Calu3 (cell line): ENCODE measurements at regions of chr11 and their contacts with region 1.

Region 1: GRCh38 chr11:77557554-77557953 is 32.2 kb upstream of the AQP11 start:
- DNase-seq: peak; percentile 51
- H3K4me3 Mint-ChIP-seq: no peak overlapping the region
- H3K27ac Mint-ChIP-seq: no peak overlapping the region
- H3K4me1 Mint-ChIP-seq: peaks cover 21% of the 10 kb centered on the region
- H3K27me3 Mint-ChIP-seq: no peaks in the 10 kb centered on the region
- CTCF ChIP-seq: no peak

Region 2: DNA sequence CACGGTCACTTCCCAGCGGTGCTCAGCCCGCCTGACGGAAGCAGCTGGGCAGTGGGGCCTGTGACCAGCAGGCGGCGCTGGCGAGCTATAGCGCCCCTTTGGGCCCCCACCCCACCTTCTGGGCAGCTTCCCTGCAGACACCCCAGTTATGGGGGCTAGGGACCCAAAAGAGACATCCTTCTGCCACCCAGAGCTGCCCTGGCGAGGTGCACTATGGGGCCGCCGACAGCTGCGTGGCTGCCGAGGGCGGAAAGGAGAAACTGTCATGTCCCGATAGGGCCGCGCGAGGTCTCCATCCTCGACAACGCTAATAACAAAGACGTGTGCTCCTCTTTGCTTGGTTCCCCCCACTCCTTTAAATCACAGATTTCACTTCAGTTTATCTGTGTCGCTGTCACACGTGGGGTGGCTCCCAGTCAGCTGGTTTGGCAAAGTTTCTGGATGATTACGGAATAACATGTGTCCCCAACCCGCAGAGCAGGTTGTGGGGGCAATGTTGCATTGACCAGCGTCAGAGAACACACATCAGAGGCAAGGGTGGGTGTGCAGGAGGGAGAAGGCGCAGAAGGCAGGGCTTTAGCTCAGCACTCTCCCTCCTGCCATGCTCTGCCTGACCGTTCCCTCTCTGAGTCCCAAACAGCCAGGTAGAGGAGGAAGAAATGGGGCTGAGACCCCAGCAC is 430.2 kb before region 1 on chr11:
- CTCF ChIA-PET with region 1: no interaction called
- intact Hi-C with region 1: loop called (anchors 5 kb)
- DNase-seq: peak; percentile 67
- H3K4me3 Mint-ChIP-seq: peak overlapping the region; percentile 62
- H3K27ac Mint-ChIP-seq: no peak overlapping the region
- H3K4me1 Mint-ChIP-seq: peaks cover 8% of the 10 kb centered on the region
- H3K27me3 Mint-ChIP-seq: no peaks in the 10 kb centered on the region
- CTCF ChIP-seq: peak; percentile 99

Region 3: DNA sequence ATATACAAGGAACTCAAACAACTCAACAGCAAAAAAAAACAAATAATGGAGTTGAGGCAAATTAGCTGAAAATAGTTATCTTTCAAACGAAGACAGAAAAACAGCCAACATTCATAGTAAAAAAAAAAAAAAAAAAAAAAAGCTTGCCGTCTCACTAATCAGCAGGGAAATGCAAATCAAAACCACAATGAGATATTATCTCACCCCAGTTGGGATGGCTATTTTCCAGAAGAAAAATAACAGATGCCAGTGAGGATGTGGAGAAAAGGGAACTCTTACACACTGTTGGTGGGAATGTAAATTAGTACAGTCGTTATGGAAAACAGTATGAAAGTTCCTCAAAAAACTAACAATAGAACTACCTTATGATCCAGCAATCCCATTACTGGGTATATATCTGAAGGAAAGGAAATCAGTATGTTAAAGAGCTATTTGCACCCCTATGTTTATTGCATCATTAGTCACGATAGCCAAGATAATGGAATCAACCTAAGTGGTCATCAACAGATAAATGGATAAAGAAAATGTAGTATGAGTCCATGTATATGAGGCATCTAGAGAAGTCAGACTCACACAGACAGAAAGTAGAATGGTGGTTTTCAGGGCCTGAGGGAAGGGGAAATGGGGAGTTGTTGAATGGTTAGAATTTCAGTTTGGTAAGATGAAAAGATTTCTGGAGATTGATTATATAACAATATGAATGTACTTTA is 687.1 kb after region 1 on chr11:
- CTCF ChIA-PET with region 1: no interaction called
- intact Hi-C with region 1: no loop called
- DNase-seq: no peak
- H3K4me3 Mint-ChIP-seq: no peak overlapping the region
- H3K27ac Mint-ChIP-seq: no peak overlapping the region
- H3K4me1 Mint-ChIP-seq: no peaks in the 10 kb centered on the region
- H3K27me3 Mint-ChIP-seq: no peaks in the 10 kb centered on the region
- CTCF ChIP-seq: no peak